AG04450 (cell line): ENCODE measurements at regions of chr11 and their contacts with region 1.

Region 1: GRCh38 chr11:114280696-114281095 is 15.5 kb upstream of the NNMT start:
- DNase-seq: peak; percentile 65
- H3K4me3 ChIP-seq: no peak overlapping the region
- H3K27ac ChIP-seq: no peak overlapping the region
- H3K27me3 ChIP-seq: peaks cover 7% of the 10 kb centered on the region
- CTCF ChIP-seq: peak; percentile 82

Region 2: DNA sequence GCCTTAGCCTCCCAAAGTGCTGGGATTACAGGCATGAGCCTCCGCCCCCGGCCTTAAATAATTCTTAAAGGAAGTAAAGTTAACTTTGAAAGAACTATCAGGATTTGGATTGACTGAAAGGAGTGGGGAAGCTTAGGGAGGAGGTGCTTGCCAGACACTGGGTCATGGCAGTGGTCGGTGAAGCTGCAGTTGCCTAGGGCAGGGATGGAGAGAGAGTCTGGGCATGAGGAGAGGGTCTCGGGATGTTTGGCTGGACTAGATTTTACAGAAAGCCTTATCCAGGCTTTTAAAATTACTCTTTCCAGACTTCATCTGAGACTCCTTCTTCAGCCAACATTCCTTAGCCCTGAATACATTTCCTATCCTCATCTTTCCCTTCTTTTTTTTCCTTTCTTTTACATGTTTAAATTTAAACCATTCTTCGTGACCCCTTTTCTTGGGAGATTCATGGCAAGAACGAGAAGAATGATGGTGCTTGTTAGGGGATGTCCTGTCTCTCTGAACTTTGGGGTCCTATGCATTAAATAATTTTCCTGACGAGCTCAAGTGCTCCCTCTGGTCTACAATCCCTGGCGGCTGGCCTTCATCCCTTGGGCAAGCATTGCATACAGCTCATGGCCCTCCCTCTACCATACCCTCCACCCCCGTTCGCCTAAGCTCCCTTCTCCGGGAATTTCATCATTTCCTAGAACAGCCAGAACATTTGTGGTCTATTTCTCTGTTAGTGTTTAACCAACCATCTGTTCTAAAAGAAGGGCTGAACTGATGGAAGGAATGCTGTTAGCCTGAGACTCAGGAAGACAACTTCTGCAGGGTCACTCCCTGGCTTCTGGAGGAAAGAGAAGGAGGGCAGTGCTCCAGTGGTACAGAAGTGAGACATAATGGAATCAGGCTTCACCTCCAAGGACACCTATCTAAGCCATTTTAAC is 15.2 kb after region 1 on chr11 and contains the start of gene NNMT:
- CTCF ChIA-PET with region 1: interaction called, 37 read pairs
- POLR2A ChIA-PET with region 1: no interaction called
- DNase-seq: peak; percentile 92
- H3K4me3 ChIP-seq: peak within 1 kb of the TSS; percentile 67
- H3K27ac ChIP-seq: peak within 1 kb of the TSS; percentile 99
- H3K27me3 ChIP-seq: no peaks in the 10 kb centered on the region
- CTCF ChIP-seq: peak; percentile 11; the same call in 1 of the 2 replicates
- polyA plus RNA-seq, gene NNMT: 188 and 217 TPM in 2 replicates

Region 3: GRCh38 chr11:114348200-114349191 is 67.8 kb after region 1 on chr11:
- CTCF ChIA-PET with region 1: interaction called, 15 read pairs
- POLR2A ChIA-PET with region 1: no interaction called
- DNase-seq: peak; percentile 43
- H3K4me3 ChIP-seq: no peak overlapping the region
- H3K27ac ChIP-seq: no peak overlapping the region
- H3K27me3 ChIP-seq: no peaks in the 10 kb centered on the region
- CTCF ChIP-seq: peak; percentile 66

Region 4: GRCh38 chr11:114416441-114416961 is 135.8 kb after region 1 on chr11:
- CTCF ChIA-PET with region 1: no interaction called
- POLR2A ChIA-PET with region 1: no interaction called
- DNase-seq: no peak
- H3K4me3 ChIP-seq: no peak overlapping the region
- H3K27ac ChIP-seq: no peak overlapping the region
- H3K27me3 ChIP-seq: no peaks in the 10 kb centered on the region
- CTCF ChIP-seq: no peak

Region 5: GRCh38 chr11:114586797-114587196 is 306.1 kb after region 1 on chr11:
- CTCF ChIA-PET with region 1: no interaction called
- POLR2A ChIA-PET with region 1: no interaction called
- DNase-seq: no peak
- H3K4me3 ChIP-seq: no peak overlapping the region
- H3K27ac ChIP-seq: no peak overlapping the region
- H3K27me3 ChIP-seq: no peaks in the 10 kb centered on the region
- CTCF ChIP-seq: peak; percentile 30

Region 6: GRCh38 chr11:114762408-114762807 is 481.7 kb after region 1 on chr11:
- CTCF ChIA-PET with region 1: interaction called, 10 read pairs
- POLR2A ChIA-PET with region 1: no interaction called
- DNase-seq: peak; percentile 23
- H3K4me3 ChIP-seq: no peak overlapping the region
- H3K27ac ChIP-seq: no peak overlapping the region
- H3K27me3 ChIP-seq: no peaks in the 10 kb centered on the region
- CTCF ChIP-seq: peak; percentile 84